ENCODE measurements at regions of chrX and their contacts with region 1.

Region 1: GRCh38 chrX:111098874-111099273 is 2.9 kb downstream of the PAK3 start:
- DNase-seq: peak in 1 of 2 experiments; percentile 81
- H3K4me3 ChIP-seq: peak overlapping the region in 1 of 4 experiments; percentile 32; a peak in 1 of 8 replicates
- H3K27ac ChIP-seq: no peak overlapping the region
- H3K4me1 ChIP-seq: peaks cover 0 to 4% (median 1%) of the 10 kb centered on the region in 4 experiments; a peak in 4 of 7 replicates
- H3K27me3 ChIP-seq: no peaks in the 10 kb centered on the region
- CTCF ChIP-seq: peak; percentile 67 to 77 (median 70)
- EP300 ChIP-seq: peak in 1 of 2 experiments; percentile 78; a peak in 2 of 3 replicates
- POLR2A ChIP-seq: no peak
- RAD21 ChIP-seq: peak; percentile 41 to 57; a peak in 3 of 4 replicates

Region 2: DNA sequence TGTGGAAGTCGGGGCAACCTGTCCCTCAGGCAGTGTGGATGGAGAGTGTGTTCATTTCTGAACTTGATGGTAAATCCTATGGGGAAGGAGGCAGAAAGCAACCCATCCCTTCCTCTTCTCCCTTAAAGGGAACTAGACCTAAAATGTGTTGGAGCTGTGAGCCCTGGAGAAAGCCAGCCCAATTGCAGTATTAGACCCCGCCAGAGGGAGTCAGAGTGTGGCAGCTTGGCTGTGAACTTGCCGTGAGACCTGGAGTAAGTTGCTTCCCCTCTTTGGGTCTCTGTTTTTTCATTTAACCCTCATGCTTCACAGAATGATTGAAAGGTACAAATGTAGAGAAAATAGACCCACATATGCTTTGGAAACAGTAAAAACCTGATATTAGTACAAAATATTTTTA is 111.6 kb before region 1 on chrX:
- CTCF ChIA-PET with region 1: interaction called, 42 read pairs
- POLR2A ChIA-PET with region 1: no interaction called
- DNase-seq: peak in 1 of 2 experiments; percentile 47
- H3K4me3 ChIP-seq: no peak overlapping the region
- H3K27ac ChIP-seq: no peak overlapping the region
- H3K4me1 ChIP-seq: peaks cover 0 to 2% (median 0%) of the 10 kb centered on the region in 4 experiments; a peak in 1 of 7 replicates
- H3K27me3 ChIP-seq: no peaks in the 10 kb centered on the region
- CTCF ChIP-seq: peak; percentile 35 to 55 (median 45)
- EP300 ChIP-seq: no peak
- POLR2A ChIP-seq: no peak
- RAD21 ChIP-seq: peak; percentile 36 to 54

Region 3: GRCh38 chrX:110992611-110993010 is 106.3 kb before region 1 on chrX:
- CTCF ChIA-PET with region 1: interaction called, 42 read pairs
- POLR2A ChIA-PET with region 1: no interaction called
- DNase-seq: peak in 1 of 2 experiments; percentile 21
- H3K4me3 ChIP-seq: no peak overlapping the region
- H3K27ac ChIP-seq: no peak overlapping the region
- H3K4me1 ChIP-seq: no peaks in the 10 kb centered on the region
- H3K27me3 ChIP-seq: no peaks in the 10 kb centered on the region
- CTCF ChIP-seq: peak in 2 of 3 experiments; percentile 47 to 48; a peak in 3 of 4 replicates
- EP300 ChIP-seq: no peak
- POLR2A ChIP-seq: no peak
- RAD21 ChIP-seq: peak; percentile 46 to 58

Region 4: GRCh38 chrX:111123125-111123524 is 24.3 kb after region 1 on chrX:
- CTCF ChIA-PET with region 1: no interaction called
- POLR2A ChIA-PET with region 1: no interaction called
- DNase-seq: no peak
- H3K4me3 ChIP-seq: no peak overlapping the region
- H3K27ac ChIP-seq: no peak overlapping the region
- H3K4me1 ChIP-seq: no peaks in the 10 kb centered on the region
- H3K27me3 ChIP-seq: no peaks in the 10 kb centered on the region
- CTCF ChIP-seq: no peak
- EP300 ChIP-seq: no peak
- POLR2A ChIP-seq: no peak
- RAD21 ChIP-seq: no peak

Region 5: GRCh38 chrX:111170017-111170416 is 71.1 kb after region 1 on chrX:
- CTCF ChIA-PET with region 1: no interaction called
- POLR2A ChIA-PET with region 1: no interaction called
- DNase-seq: no peak
- H3K4me3 ChIP-seq: no peak overlapping the region
- H3K27ac ChIP-seq: no peak overlapping the region
- H3K4me1 ChIP-seq: no peaks in the 10 kb centered on the region
- H3K27me3 ChIP-seq: no peaks in the 10 kb centered on the region
- CTCF ChIP-seq: no peak
- EP300 ChIP-seq: no peak
- POLR2A ChIP-seq: no peak
- RAD21 ChIP-seq: no peak